ENCODE measurements at regions of chr6 and their contacts with region 1.

Region 1: DNA sequence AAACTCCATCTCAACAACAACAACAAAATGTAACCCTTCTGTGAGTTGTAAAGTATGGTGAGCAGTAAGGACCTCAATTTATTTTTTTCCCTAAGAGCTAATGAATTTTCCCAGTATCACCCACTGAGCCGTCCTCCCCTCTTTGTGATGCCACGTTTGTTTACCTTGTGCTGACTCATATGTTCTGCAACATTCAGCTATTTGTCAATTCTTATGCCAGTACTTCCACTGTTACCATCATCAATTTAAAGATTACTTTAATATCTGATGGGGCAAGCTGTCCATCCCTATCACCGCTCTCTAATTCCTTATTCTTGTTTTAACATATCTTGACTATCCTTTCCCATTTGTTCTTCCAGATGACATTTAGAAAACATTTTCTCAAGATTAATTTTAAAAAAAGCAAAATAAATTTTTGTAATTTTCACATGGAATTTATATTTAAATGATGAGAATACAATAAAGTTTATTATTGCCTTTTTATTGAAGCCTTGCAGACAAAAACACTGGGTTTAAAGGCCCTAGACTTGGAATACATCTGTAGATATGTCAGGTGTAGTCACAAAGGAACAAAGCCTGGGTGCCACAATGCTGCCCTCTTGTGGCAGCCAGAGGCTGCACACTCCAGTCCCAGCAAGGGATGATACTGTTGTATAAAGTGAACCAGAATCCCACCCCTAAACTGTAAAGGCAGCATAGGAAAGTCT is 37.4 kb downstream of the MAK start:
- DNase-seq: peak; percentile 68
- ATAC-seq: peak; percentile 100
- H3K4me3 ChIP-seq: no peak overlapping the region
- H3K27ac ChIP-seq: no peak overlapping the region
- H3K4me1 ChIP-seq: peaks cover 7% of the 10 kb centered on the region; the same call in 1 of the 2 replicates
- H3K27me3 ChIP-seq: no peaks in the 10 kb centered on the region
- CTCF ChIP-seq: peak; percentile 95
- EP300 ChIP-seq: no peak
- POLR2A ChIP-seq: no peak
- RAD21 ChIP-seq: peak; percentile 87

Region 2: DNA sequence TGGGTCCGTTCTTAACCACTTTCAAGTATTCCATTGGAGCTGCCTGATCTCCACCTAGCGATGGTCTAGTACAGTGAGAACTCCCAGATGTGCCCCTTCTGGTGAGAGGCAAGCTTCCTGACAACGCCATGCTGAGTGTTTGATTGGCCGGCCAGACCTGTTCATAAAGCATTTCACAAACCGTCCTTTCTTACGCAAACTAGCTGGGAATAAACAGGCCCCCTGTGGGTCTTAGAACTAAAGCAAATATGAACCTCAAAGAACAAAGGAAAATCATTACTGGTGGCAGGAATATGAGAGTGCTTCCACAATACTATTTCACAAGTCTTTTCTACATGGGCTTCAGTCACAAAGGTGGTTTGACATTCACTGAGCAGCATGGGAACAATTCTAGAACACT is 295.5 kb before region 1 on chr6:
- CTCF ChIA-PET with region 1: interaction called, 25 read pairs
- POLR2A ChIA-PET with region 1: no interaction called
- in situ Hi-C with region 1: no loop called
- intact Hi-C with region 1: loop called (anchors 1 kb)
- DNase-seq: peak; percentile 99
- ATAC-seq: peak; percentile 99
- H3K4me3 ChIP-seq: no peak overlapping the region
- H3K27ac ChIP-seq: no peak overlapping the region
- H3K4me1 ChIP-seq: peaks cover 24% of the 10 kb centered on the region
- H3K27me3 ChIP-seq: peaks cover 0 to 36% of the 10 kb centered on the region in 2 experiments; a peak in 4 of 5 replicates
- CTCF ChIP-seq: peak; percentile 64
- EP300 ChIP-seq: peak; percentile 91 to 95
- POLR2A ChIP-seq: no peak
- RAD21 ChIP-seq: peak; percentile 64; the same call in 1 of the 2 replicates

Region 3: DNA sequence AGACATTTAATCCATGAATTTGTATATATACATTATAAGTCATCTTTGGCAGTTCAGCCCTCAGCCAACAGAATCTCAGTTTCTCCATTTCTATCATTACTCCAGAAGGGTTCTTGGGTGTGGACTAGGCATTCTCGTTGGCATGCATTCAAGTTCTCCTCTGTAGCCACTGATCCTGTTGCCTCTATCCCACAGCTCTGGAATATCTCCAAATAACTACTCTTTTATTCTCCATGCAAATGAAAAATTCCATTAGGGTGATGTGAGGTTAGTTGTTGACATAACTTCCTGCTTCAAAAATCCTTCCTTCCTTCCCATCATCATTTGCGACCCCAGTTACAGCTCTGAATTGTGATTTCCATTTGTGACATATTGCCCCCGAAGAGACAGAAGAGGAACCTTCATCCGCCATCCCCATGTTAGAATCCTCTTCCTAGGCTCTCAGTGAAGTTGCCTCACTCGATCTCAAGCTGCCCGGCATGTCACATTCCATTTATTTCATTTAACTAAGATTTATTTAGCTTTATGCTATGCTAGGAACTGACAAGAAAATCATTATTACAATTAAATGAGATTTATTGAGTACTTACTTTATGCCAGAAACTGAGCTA is 1395.4 kb after region 1 on chr6:
- CTCF ChIA-PET with region 1: no interaction called
- POLR2A ChIA-PET with region 1: no interaction called
- in situ Hi-C with region 1: no loop called
- intact Hi-C with region 1: no loop called
- DNase-seq: no peak
- ATAC-seq: no peak
- H3K4me3 ChIP-seq: no peak overlapping the region
- H3K27ac ChIP-seq: no peak overlapping the region
- H3K4me1 ChIP-seq: no peaks in the 10 kb centered on the region
- H3K27me3 ChIP-seq: no peaks in the 10 kb centered on the region
- CTCF ChIP-seq: no peak
- EP300 ChIP-seq: no peak
- POLR2A ChIP-seq: no peak
- RAD21 ChIP-seq: no peak